ENCODE measurements at regions of chr2 and their contacts with region 1.

Region 1: GRCh38 chr2:80001704-80002103 is 302.8 kb downstream of the LRRTM1 start:
- DNase-seq: peak; percentile 75
- ATAC-seq: peak; percentile 87
- H3K4me3 ChIP-seq: no peak overlapping the region
- H3K27ac ChIP-seq: peak overlapping the region; percentile 86
- H3K4me1 ChIP-seq: peaks cover 16% of the 10 kb centered on the region
- H3K27me3 ChIP-seq: no peaks in the 10 kb centered on the region
- CTCF ChIP-seq: no peak
- POLR2A ChIP-seq: no peak
- RAD21 ChIP-seq: no peak

Region 2: GRCh38 chr2:79952616-79953015 is 49.1 kb before region 1 on chr2:
- CTCF ChIA-PET with region 1: no interaction called
- POLR2A ChIA-PET with region 1: no interaction called
- dilution Hi-C with region 1: no loop called
- in situ Hi-C with region 1: no loop called
- intact Hi-C with region 1: loop called (anchors 5 kb)
- DNase-seq: peak; percentile 51
- ATAC-seq: peak; percentile 79
- H3K4me3 ChIP-seq: no peak overlapping the region
- H3K27ac ChIP-seq: peak overlapping the region; percentile 96; the same call in 1 of the 2 replicates
- H3K4me1 ChIP-seq: peaks cover 12% of the 10 kb centered on the region
- H3K27me3 ChIP-seq: peaks cover 2% of the 10 kb centered on the region; the same call in 1 of the 2 replicates
- CTCF ChIP-seq: no peak
- POLR2A ChIP-seq: no peak
- RAD21 ChIP-seq: no peak

Region 3: GRCh38 chr2:80042635-80043034 is 40.9 kb after region 1 on chr2:
- CTCF ChIA-PET with region 1: no interaction called
- POLR2A ChIA-PET with region 1: no interaction called
- dilution Hi-C with region 1: no loop called
- in situ Hi-C with region 1: no loop called
- intact Hi-C with region 1: loop called (anchors 1 kb)
- DNase-seq: peak; percentile 69
- ATAC-seq: peak; percentile 80
- H3K4me3 ChIP-seq: no peak overlapping the region
- H3K27ac ChIP-seq: no peak overlapping the region
- H3K4me1 ChIP-seq: peaks cover 9% of the 10 kb centered on the region
- H3K27me3 ChIP-seq: no peaks in the 10 kb centered on the region
- CTCF ChIP-seq: no peak
- POLR2A ChIP-seq: no peak
- RAD21 ChIP-seq: no peak